Caco-2 (cell line): ENCODE measurements at regions of chr18 and their contacts with region 1.

Region 1: DNA sequence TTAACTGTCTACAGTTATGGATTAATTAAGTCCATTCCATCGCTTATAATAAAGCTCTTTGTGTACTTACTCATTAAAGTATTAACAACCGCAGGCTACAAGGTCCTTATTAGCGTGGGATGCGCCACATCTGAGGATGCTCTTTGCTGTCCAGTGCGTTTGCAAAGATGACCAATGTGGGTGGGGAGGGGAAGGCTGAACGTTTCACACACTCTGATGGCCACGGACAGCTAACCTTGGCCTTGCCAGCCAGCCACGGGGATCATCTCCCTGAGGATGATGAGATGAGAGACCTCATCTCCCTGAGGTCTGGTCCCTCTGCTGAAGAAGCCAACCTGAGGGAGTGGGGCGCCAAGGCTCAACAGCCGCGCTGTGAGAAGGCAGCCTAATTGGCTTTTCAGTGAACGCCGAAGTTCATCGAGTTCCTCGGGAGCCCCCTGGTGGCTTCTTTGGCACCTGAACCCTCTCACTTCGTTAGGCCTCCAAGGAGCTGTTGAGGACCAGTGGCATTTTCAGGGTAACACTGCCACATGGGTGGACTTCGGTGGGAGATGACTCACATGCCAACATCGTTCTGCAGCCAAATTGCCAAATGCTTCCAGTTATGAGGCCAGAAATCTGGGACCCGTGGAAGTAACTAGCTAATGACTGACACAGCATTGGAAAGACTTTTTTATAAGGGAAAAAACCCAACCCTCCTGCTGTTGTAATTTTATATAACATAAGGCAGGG is 69.3 kb upstream of the SEC11C start:
- DNase-seq: peak; percentile 68 to 79
- H3K4me3 ChIP-seq: no peak overlapping the region
- H3K4me3 Mint-ChIP-seq: no peak overlapping the region
- H3K27ac Mint-ChIP-seq: no peak overlapping the region
- H3K4me1 ChIP-seq: no peaks in the 10 kb centered on the region
- H3K4me1 Mint-ChIP-seq: peaks cover 8% of the 10 kb centered on the region
- H3K27me3 ChIP-seq: no peaks in the 10 kb centered on the region
- H3K27me3 Mint-ChIP-seq: no peaks in the 10 kb centered on the region
- CTCF ChIP-seq: peak; percentile 67 to 70

Region 2: DNA sequence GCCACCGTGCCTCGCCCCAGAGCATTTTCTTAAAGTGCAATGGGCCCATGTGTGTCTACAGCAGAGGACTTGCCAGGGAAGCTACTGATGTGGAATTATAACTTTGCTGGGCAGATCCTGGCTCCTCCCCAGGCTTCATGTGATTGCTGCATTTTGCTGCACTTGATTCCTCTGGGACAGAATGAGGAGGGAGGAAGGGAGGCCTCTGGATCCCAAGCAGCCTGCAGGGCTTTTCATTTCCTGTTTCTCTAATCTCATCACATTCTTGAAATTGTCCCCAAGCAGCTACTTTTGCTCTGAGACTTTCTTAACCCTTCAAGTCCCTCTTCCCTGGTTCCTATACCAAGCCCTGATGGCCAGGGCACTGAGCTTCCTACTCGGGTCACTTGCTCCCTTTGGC is 65.1 kb before region 1 on chr18:
- CTCF ChIA-PET with region 1: no interaction called
- POLR2A ChIA-PET with region 1: no interaction called
- intact Hi-C with region 1: loop called (anchors 10 kb)
- DNase-seq: peak; percentile 19 to 46
- H3K4me3 ChIP-seq: no peak overlapping the region
- H3K4me3 Mint-ChIP-seq: no peak overlapping the region
- H3K27ac Mint-ChIP-seq: no peak overlapping the region
- H3K4me1 ChIP-seq: no peaks in the 10 kb centered on the region
- H3K4me1 Mint-ChIP-seq: no peaks in the 10 kb centered on the region
- H3K27me3 ChIP-seq: no peaks in the 10 kb centered on the region
- H3K27me3 Mint-ChIP-seq: no peaks in the 10 kb centered on the region
- CTCF ChIP-seq: no peak